ENCODE measurements at regions of chr11 and their contacts with region 1.

Region 1: GRCh38 chr11:43282607-43283440 is 29.0 kb upstream of the API5 start:
- DNase-seq: peak in 8 of 10 donors; percentile 44 to 67 (median 54)
- H3K4me3 ChIP-seq: peak overlapping the region in 35 of 59 donors; percentile 0 to 51 (median 25)
- H3K27ac ChIP-seq: peak overlapping the region in 1 of 59 donors; percentile 14
- H3K27me3 ChIP-seq: peaks cover 0 to 6% (median 0%) of the 10 kb centered on the region in 45 donors
- CTCF ChIP-seq: peak; percentile 70 to 97 (median 86)

Region 2: DNA sequence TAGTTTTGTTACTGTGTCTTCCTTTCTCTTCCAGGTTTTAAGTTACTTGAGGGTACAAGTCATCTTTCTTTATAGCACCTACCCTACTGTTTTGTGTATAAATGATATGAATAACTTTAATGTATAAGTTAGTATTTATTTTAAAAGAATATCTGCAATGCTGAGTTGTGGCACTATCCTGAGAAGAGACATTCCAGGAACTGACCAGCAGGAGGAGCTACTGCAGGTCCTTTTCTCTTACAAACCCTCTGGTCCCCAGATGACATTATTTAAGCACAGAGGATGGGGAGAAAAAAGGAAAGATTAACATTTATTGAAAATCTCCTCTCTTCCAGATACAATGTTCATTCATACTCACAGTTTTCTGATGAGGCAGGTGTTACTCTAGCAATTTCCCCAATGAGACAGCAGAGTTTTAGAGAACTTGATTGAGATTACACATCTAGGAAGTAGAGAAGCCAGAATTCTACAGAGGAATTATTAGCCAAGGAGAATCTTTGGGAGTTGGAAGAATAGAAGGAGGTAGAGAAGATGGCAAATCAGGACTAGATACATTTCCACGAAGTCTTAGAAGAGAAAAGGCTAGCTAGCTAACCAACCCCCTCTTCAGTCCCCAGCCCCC is 512.3 kb before region 1 on chr11:
- intact Hi-C with region 1: loop called (anchors 2 to 5 kb)
- DNase-seq: peak in 3 of 10 donors; percentile 7 to 59 (median 41)
- H3K4me3 ChIP-seq: no peak overlapping the region
- H3K27ac ChIP-seq: no peak overlapping the region
- H3K27me3 ChIP-seq: no peaks in the 10 kb centered on the region
- CTCF ChIP-seq: peak; percentile 51 to 89 (median 79)

Region 3: DNA sequence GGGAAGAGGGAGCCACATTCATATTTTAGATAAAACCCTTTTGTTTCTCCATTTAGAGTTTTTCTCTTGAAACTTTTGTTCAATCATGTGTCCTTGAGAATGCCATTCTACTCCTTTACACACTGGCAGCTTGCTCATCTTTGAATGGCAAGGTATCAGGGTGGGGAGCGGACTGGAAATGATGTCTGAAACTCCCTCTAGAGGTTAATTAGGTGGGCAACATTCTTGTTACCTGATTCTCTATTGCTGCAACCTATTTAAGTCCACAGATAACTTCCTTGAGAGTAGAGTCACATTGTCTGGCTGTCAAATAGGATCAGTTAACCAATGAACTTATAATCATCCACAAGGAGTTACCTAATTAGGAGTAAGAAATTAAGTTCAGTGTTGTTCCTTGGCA is 504.6 kb before region 1 on chr11:
- intact Hi-C with region 1: loop called in 1 of 2 experiments (anchors 5 kb)
- DNase-seq: no peak
- H3K4me3 ChIP-seq: no peak overlapping the region
- H3K27ac ChIP-seq: no peak overlapping the region
- H3K27me3 ChIP-seq: no peaks in the 10 kb centered on the region
- CTCF ChIP-seq: no peak

Region 4: DNA sequence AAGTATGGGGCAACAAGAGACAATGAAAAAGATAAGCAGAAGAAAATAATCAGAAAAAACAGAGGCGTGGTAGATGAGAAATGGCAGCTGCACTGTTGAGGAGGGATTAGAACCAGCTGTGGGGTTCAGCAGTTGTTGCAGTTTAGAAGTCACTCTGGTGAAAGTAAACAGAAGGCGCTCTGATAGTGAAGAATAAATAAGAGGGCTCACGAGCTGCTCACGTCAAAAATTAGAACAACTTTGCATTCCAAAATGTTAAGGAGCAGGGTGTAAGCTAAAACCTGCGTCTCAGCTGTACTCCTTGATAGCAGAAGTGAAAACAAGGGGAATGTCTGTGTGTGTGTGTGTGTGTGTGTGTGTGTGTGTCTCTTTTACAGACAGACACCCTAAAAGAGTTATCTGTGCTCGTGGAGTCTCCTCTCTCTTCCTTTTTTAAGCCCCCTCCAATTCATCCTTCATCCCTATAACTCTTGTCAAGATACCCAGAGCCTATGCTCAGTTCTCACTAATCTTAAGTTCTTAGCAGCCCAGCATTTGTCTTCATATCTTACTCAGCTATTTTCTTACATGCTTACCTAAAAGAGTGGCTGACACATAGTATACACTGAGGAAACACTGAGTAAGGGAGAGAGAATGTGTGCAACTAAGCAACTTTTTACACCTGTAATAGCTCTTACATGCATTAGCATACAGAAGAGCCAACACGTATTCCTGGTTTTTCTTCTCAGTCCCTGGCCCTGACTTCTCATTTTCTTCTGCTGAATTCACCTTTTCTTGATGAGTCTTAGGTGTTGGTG is 84.8 kb after region 1 on chr11:
- intact Hi-C with region 1: no loop called
- DNase-seq: no peak
- H3K4me3 ChIP-seq: no peak overlapping the region
- H3K27ac ChIP-seq: no peak overlapping the region
- H3K27me3 ChIP-seq: no peaks in the 10 kb centered on the region
- CTCF ChIP-seq: no peak

Region 5: GRCh38 chr11:43486141-43486540 is 203.3 kb after region 1 on chr11:
- intact Hi-C with region 1: no loop called
- DNase-seq: no peak
- H3K4me3 ChIP-seq: no peak overlapping the region
- H3K27ac ChIP-seq: no peak overlapping the region
- H3K27me3 ChIP-seq: no peaks in the 10 kb centered on the region
- CTCF ChIP-seq: no peak

Region 6: GRCh38 chr11:43546561-43547429 is 264.0 kb after region 1 on chr11:
- intact Hi-C with region 1: no loop called
- DNase-seq: no peak
- H3K4me3 ChIP-seq: peak overlapping the region in 52 of 59 donors; percentile 11 to 63 (median 47)
- H3K27ac ChIP-seq: peak overlapping the region in 19 of 59 donors; percentile 13 to 79 (median 63)
- H3K27me3 ChIP-seq: peaks cover 0 to 23% (median 0%) of the 10 kb centered on the region in 45 donors
- CTCF ChIP-seq: no peak

Measured in dorsolateral prefrontal cortex (tissue), 120 donors.